CD4-positive, alpha-beta T cell (primary cell): ENCODE measurements at regions of chr17 and their contacts with region 1.

Region 1: GRCh38 chr17:76501018-76501826 is at the start of gene RHBDF2:
- DNase-seq: peak; percentile 91 to 99 (median 97)
- ATAC-seq: peak; percentile 96
- H3K4me3 ChIP-seq: peak within 1 kb of the TSS; percentile 74
- H3K4me3 Mint-ChIP-seq: peak within 1 kb of the TSS; percentile 87
- H3K27ac ChIP-seq: peak within 1 kb of the TSS; percentile 46 to 61
- H3K27ac Mint-ChIP-seq: peak within 1 kb of the TSS; percentile 94
- H3K4me1 ChIP-seq: peaks cover 60% of the 10 kb centered on the region
- H3K4me1 Mint-ChIP-seq: peaks cover 36% of the 10 kb centered on the region
- H3K27me3 ChIP-seq: no peaks in the 10 kb centered on the region
- H3K27me3 Mint-ChIP-seq: no peaks in the 10 kb centered on the region
- CTCF ChIP-seq: no peak
- total RNA-seq, gene RHBDF2: 22.6 to 24.9 TPM

Region 2: GRCh38 chr17:75589012-75589918 is 912.0 kb before region 1 on chr17:
- CTCF ChIA-PET with region 1: no interaction called
- POLR2A ChIA-PET with region 1: no interaction called
- intact Hi-C with region 1: no loop called
- DNase-seq: peak; percentile 91 to 99 (median 96)
- ATAC-seq: peak; percentile 88
- H3K4me3 ChIP-seq: peak overlapping the region; percentile 66
- H3K4me3 Mint-ChIP-seq: peak overlapping the region; percentile 81
- H3K27ac ChIP-seq: peak overlapping the region in 1 of 2 donors; percentile 56
- H3K27ac Mint-ChIP-seq: no peak overlapping the region
- H3K4me1 ChIP-seq: peaks cover 32% of the 10 kb centered on the region
- H3K4me1 Mint-ChIP-seq: peaks cover 11% of the 10 kb centered on the region
- H3K27me3 ChIP-seq: no peaks in the 10 kb centered on the region
- H3K27me3 Mint-ChIP-seq: no peaks in the 10 kb centered on the region
- CTCF ChIP-seq: peak; percentile 57

Region 3: GRCh38 chr17:76103274-76104139 is 397.7 kb before region 1 on chr17 and contains the start of gene EXOC7:
- CTCF ChIA-PET with region 1: no interaction called
- POLR2A ChIA-PET with region 1: no interaction called
- intact Hi-C with region 1: loop called in 1 of 2 experiments (anchors 5 kb)
- DNase-seq: peak; percentile 86 to 97 (median 92)
- ATAC-seq: peak; percentile 94
- H3K4me3 ChIP-seq: peak within 1 kb of the TSS; percentile 85
- H3K4me3 Mint-ChIP-seq: peak within 1 kb of the TSS; percentile 98
- H3K27ac ChIP-seq: peak within 1 kb of the TSS; percentile 68 to 82
- H3K27ac Mint-ChIP-seq: peak within 1 kb of the TSS; percentile 90
- H3K4me1 ChIP-seq: peaks cover 32% of the 10 kb centered on the region
- H3K4me1 Mint-ChIP-seq: peaks cover 38% of the 10 kb centered on the region
- H3K27me3 ChIP-seq: no peaks in the 10 kb centered on the region
- H3K27me3 Mint-ChIP-seq: no peaks in the 10 kb centered on the region
- CTCF ChIP-seq: no peak
- total RNA-seq, gene EXOC7: 88.1 to 90.6 TPM

Region 4: DNA sequence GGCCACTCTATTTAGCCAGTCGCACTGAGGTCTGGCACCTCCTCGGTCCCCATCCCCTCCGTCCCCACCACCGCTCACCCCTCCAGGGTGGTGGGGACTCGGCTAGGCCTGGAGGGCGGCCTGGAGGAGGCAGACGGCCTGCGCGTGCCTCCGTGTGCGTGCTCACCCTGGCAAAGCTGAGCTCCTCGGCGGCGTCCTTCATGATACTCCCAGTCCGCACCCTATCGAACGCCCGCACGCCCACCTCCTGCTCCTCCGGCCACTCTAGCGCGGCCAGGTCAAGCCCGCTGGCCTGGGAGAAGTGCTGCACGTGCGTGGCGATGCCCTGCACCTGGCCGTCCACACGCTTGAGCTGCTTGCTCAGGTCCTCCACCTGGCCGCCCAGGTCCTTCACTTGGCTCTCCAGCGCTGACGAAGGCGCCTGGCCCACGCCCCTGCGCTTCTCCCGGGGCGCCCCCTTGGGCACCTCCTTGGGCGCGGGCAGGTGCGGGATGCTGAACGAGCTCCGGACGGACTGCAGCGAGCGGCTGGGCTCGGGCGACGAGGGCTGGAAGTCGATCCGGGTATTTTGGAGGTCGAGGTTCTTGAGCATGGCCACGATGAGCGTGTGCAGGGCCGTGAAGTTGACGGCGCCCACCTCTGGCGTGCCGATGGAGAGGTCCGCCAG is 193.8 kb before region 1 on chr17:
- CTCF ChIA-PET with region 1: no interaction called
- POLR2A ChIA-PET with region 1: no interaction called
- intact Hi-C with region 1: loop called (anchors 2 to 10 kb)
- DNase-seq: no peak
- ATAC-seq: no peak
- H3K4me3 ChIP-seq: no peak overlapping the region
- H3K4me3 Mint-ChIP-seq: no peak overlapping the region
- H3K27ac ChIP-seq: no peak overlapping the region
- H3K27ac Mint-ChIP-seq: no peak overlapping the region
- H3K4me1 ChIP-seq: no peaks in the 10 kb centered on the region
- H3K4me1 Mint-ChIP-seq: no peaks in the 10 kb centered on the region
- H3K27me3 ChIP-seq: no peaks in the 10 kb centered on the region
- H3K27me3 Mint-ChIP-seq: no peaks in the 10 kb centered on the region
- CTCF ChIP-seq: no peak

Region 5: DNA sequence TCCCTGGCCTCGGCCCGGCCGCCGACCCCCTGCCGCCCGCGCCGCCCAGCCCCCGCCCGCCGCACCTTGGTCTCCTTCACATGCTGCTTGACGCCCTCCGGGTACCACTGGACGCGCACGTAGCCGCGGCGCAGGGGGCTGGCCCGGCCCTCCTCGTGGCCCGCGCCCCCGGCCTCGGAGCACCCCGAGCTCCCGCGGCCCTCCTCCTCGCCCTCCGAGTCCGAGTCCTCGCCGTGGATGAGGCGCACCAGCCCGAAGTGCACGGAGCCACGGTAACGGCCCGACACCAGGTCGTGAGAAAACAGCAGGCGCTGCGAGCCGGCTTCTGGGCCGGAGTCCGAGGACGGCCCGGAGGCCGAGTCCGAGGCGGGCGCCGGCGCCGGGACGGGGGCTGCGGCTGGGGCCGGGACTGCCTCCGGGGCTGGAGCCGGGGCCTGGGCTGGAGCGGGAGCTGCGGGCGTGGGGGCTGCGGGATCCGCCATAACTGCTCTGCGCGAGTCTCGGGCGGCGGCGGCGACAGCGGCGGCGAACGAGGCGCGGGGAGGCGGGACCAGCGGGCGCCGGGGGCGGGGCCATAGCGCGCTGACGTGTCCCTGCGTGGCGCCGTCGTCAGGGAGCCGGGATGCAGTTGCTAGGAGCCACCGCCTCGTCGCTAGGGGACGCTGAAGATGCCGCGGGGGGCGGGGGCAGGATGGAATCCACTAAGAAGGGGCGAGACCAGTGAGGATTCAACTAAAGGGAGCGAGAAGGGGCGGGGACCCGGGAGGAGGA is 48.4 kb before region 1 on chr17 and contains the start of gene UBE2O:
- CTCF ChIA-PET with region 1: no interaction called
- POLR2A ChIA-PET with region 1: interaction called, 8 read pairs
- intact Hi-C with region 1: loop called in 1 of 2 experiments (anchors 2 kb)
- DNase-seq: peak; percentile 82 to 97 (median 92)
- ATAC-seq: peak; percentile 90
- H3K4me3 ChIP-seq: peak within 1 kb of the TSS; percentile 69
- H3K4me3 Mint-ChIP-seq: peak within 1 kb of the TSS; percentile 79
- H3K27ac ChIP-seq: peak within 1 kb of the TSS; percentile 50 to 65
- H3K27ac Mint-ChIP-seq: peak within 1 kb of the TSS; percentile 82
- H3K4me1 ChIP-seq: peaks cover 30% of the 10 kb centered on the region
- H3K4me1 Mint-ChIP-seq: peaks cover 45% of the 10 kb centered on the region
- H3K27me3 ChIP-seq: no peaks in the 10 kb centered on the region
- H3K27me3 Mint-ChIP-seq: no peaks in the 10 kb centered on the region
- CTCF ChIP-seq: peak; percentile 47
- total RNA-seq, gene UBE2O: 22.7 to 25.1 TPM

Region 6: GRCh38 chr17:76515274-76515949 is 14.2 kb after region 1 on chr17:
- CTCF ChIA-PET with region 1: no interaction called
- POLR2A ChIA-PET with region 1: interaction called, 12 read pairs
- intact Hi-C with region 1: no loop called
- DNase-seq: peak; percentile 71 to 98 (median 80)
- ATAC-seq: peak; percentile 82
- H3K4me3 ChIP-seq: peak overlapping the region; percentile 34
- H3K4me3 Mint-ChIP-seq: peak overlapping the region; percentile 78
- H3K27ac ChIP-seq: peak overlapping the region; percentile 83 to 84
- H3K27ac Mint-ChIP-seq: peak overlapping the region; percentile 98
- H3K4me1 ChIP-seq: peaks cover 86% of the 10 kb centered on the region
- H3K4me1 Mint-ChIP-seq: peaks cover 37% of the 10 kb centered on the region
- H3K27me3 ChIP-seq: no peaks in the 10 kb centered on the region
- H3K27me3 Mint-ChIP-seq: no peaks in the 10 kb centered on the region
- CTCF ChIP-seq: no peak